ENCODE measurements at regions of chr4 and their contacts with region 1.

Region 1: GRCh38 chr4:38902695-38903094 is 35.1 kb downstream of the FAM114A1 start:
- DNase-seq: peak in 1 of 2 experiments; percentile 70
- H3K4me3 ChIP-seq: no peak overlapping the region
- H3K4me1 ChIP-seq: peaks cover 1% of the 10 kb centered on the region
- H3K27me3 ChIP-seq: 0 out of 2 replicates have a peak, but pooled peaks cover 2% of the 10 kb centered on the region

Region 2: GRCh38 chr4:38489924-38490639 is 412.6 kb before region 1 on chr4:
- in situ Hi-C with region 1: no loop called
- DNase-seq: no peak
- H3K4me3 ChIP-seq: no peak overlapping the region
- H3K4me1 ChIP-seq: no peaks in the 10 kb centered on the region
- H3K27me3 ChIP-seq: no peaks in the 10 kb centered on the region

Region 3: GRCh38 chr4:39134683-39135319 is 232.1 kb after region 1 on chr4:
- in situ Hi-C with region 1: loop called (anchors 5 kb)
- DNase-seq: peak in 1 of 2 experiments; percentile 2
- H3K4me3 ChIP-seq: no peak overlapping the region
- H3K4me1 ChIP-seq: no peaks in the 10 kb centered on the region; the same call in 1 of the 2 replicates
- H3K27me3 ChIP-seq: no peaks in the 10 kb centered on the region